ENCODE measurements at regions of chr2 and their contacts with region 1.

Region 1: GRCh38 chr2:68715353-68716041 is 19.1 kb upstream of the ARHGAP25 start:
- DNase-seq: no peak
- ATAC-seq: peak; percentile 59
- H3K4me3 ChIP-seq: no peak overlapping the region
- H3K4me3 Mint-ChIP-seq: peak overlapping the region in 9 of 10 donors; percentile 23 to 66 (median 49)
- H3K27ac ChIP-seq: peak overlapping the region; percentile 17
- H3K27ac Mint-ChIP-seq: peak overlapping the region; percentile 34 to 96 (median 88)
- H3K4me1 ChIP-seq: peaks cover 59 to 63% of the 10 kb centered on the region in 2 donors
- H3K4me1 Mint-ChIP-seq: peaks cover 51 to 83% (median 81%) of the 10 kb centered on the region in 7 donors
- H3K27me3 ChIP-seq: no peaks in the 10 kb centered on the region
- H3K27me3 Mint-ChIP-seq: no peaks in the 10 kb centered on the region

Region 2: DNA sequence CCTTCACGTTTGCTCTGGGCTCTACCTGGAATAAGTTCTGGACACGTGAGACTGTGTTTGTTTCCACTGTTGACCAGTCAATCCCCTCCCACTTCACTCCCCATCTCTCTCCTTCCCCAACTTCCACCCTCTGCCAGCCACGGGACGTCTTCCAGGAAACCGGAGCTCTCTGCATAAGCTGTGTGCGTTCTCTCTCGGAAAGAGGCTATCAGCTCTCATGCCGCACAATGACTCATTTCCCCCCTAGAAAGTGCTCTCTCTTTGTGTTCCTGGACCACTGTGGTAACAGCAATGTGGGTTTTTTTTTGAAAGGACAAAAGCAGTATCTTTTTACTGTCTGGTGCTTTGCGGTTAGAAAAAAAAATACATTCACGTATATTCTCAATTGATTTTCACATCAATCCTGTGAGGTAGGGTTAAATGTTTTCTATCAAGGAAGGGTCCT is 61.9 kb before region 1 on chr2:
- CTCF ChIA-PET with region 1: no interaction called
- POLR2A ChIA-PET with region 1: no interaction called
- intact Hi-C with region 1: loop called in 1 of 2 experiments (anchors 5 kb)
- DNase-seq: peak in 1 of 9 donors; percentile 53
- ATAC-seq: peak; percentile 64
- H3K4me3 ChIP-seq: no peak overlapping the region
- H3K4me3 Mint-ChIP-seq: peak overlapping the region in 2 of 10 donors; percentile 51 to 71
- H3K27ac ChIP-seq: no peak overlapping the region
- H3K27ac Mint-ChIP-seq: peak overlapping the region in 3 of 9 donors; percentile 5 to 58 (median 41)
- H3K4me1 ChIP-seq: peaks cover 6 to 8% of the 10 kb centered on the region in 2 donors
- H3K4me1 Mint-ChIP-seq: peaks cover 16 to 47% (median 20%) of the 10 kb centered on the region in 7 donors
- H3K27me3 ChIP-seq: no peaks in the 10 kb centered on the region
- H3K27me3 Mint-ChIP-seq: peaks cover 4 to 43% (median 17%) of the 10 kb centered on the region in 5 donors

Region 3: DNA sequence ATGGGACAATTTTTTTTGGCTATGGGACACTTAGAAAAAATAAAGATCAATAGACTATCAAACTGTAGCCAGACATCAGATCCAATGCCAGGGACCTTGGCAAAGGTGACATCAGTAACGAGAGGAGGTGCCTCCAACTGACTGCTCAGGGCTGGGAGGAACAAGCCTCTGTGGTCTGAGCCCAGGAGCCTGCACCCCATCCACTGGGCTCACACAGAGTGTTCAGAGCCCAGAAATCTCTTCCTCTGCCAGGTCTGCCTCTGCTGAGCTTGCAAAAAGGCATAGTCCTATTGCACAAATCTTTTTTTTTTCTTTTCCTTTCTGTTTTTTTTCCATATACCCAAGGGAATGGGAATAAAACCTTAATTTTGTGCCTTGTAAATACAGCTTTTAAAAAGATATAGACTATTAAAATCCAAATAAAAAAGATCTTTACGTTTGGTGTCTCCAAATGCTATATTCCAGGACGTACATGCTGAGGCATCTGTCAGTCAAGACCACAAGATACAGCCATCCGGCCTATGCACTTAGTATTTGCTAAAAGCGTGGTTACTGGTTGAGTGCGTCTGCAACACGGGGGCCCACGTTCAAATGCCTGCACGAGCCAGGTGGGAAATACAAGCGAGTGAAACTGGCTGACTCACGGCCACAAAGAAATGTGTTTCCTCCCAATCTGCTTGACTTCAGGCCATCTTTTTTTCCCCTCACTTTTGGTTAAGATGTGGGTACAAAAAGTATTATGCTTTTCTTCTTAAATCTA is 11.3 kb after region 1 on chr2:
- CTCF ChIA-PET with region 1: interaction called, 3 read pairs
- POLR2A ChIA-PET with region 1: interaction called, 114 read pairs
- intact Hi-C with region 1: loop called (anchors 1 kb)
- DNase-seq: peak in 8 of 9 donors; percentile 66 to 84 (median 74)
- ATAC-seq: peak; percentile 96
- H3K4me3 ChIP-seq: peak overlapping the region; percentile 4
- H3K4me3 Mint-ChIP-seq: peak overlapping the region; percentile 10 to 76 (median 61)
- H3K27ac ChIP-seq: peak overlapping the region; percentile 50
- H3K27ac Mint-ChIP-seq: peak overlapping the region; percentile 39 to 89 (median 83)
- H3K4me1 ChIP-seq: peaks cover 44 to 56% of the 10 kb centered on the region in 2 donors
- H3K4me1 Mint-ChIP-seq: peaks cover 48 to 77% (median 71%) of the 10 kb centered on the region in 7 donors
- H3K27me3 ChIP-seq: no peaks in the 10 kb centered on the region
- H3K27me3 Mint-ChIP-seq: no peaks in the 10 kb centered on the region

Region 4: GRCh38 chr2:68734688-68735525 is 19.4 kb after region 1 on chr2 and contains the start of gene ARHGAP25:
- CTCF ChIA-PET with region 1: interaction called, 33 read pairs
- POLR2A ChIA-PET with region 1: interaction called, 114 read pairs
- intact Hi-C with region 1: loop called in 1 of 2 experiments (anchors 1 kb)
- DNase-seq: peak; percentile 20 to 81 (median 69)
- ATAC-seq: peak; percentile 78
- H3K4me3 ChIP-seq: peak within 1 kb of the TSS; percentile 77
- H3K4me3 Mint-ChIP-seq: no peak within 1 kb of the TSS
- H3K27ac ChIP-seq: peak within 1 kb of the TSS; percentile 78
- H3K27ac Mint-ChIP-seq: no peak within 1 kb of the TSS
- H3K4me1 ChIP-seq: peaks cover 38 to 48% of the 10 kb centered on the region in 2 donors
- H3K4me1 Mint-ChIP-seq: peaks cover 23 to 37% (median 32%) of the 10 kb centered on the region in 7 donors
- H3K27me3 ChIP-seq: no peaks in the 10 kb centered on the region
- H3K27me3 Mint-ChIP-seq: no peaks in the 10 kb centered on the region
- total RNA-seq, gene ARHGAP25: 68.2 to 139 (median 116) TPM

Measured in naive thymus-derived CD4-positive, alpha-beta T cell (primary cell).